MCF 10A (cell line): ENCODE measurements at regions of chr13 and their contacts with region 1.

Region 1: GRCh38 chr13:29850224-29850898 is at the start of gene UBL3:
- DNase-seq: peak; percentile 97
- H3K4me3 Mint-ChIP-seq: peak within 1 kb of the TSS; percentile 89
- H3K27ac Mint-ChIP-seq: peak within 1 kb of the TSS; percentile 100
- H3K4me1 Mint-ChIP-seq: peaks cover 12% of the 10 kb centered on the region
- H3K27me3 Mint-ChIP-seq: no peaks in the 10 kb centered on the region
- CTCF ChIP-seq: no peak
- total RNA-seq, gene UBL3: 18.2 and 22.4 TPM in 2 replicates

Region 2: GRCh38 chr13:28991764-28992163 is 858.6 kb before region 1 on chr13:
- CTCF ChIA-PET with region 1: no interaction called
- POLR2A ChIA-PET with region 1: no interaction called
- intact Hi-C with region 1: no loop called
- DNase-seq: no peak
- H3K4me3 Mint-ChIP-seq: no peak overlapping the region
- H3K27ac Mint-ChIP-seq: no peak overlapping the region
- H3K4me1 Mint-ChIP-seq: no peaks in the 10 kb centered on the region
- H3K27me3 Mint-ChIP-seq: no peaks in the 10 kb centered on the region
- CTCF ChIP-seq: no peak

Region 3: DNA sequence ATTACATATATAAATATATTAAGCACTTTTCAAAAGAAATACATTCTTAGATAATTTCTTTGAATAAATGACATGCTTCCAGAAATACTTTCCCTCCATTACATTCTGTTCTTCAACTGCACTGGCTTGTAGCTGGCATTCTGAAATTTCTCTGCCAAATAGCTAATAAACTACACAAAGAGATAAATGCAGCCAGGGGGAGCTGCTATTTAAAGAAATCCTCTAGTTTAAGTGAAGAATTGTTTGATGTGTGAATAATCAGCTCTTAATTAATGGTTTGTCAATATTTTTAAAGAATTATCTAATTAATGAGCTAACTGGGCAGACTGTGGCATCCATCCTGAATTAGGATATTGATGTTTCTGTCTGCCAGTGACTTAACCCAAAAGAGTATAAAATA is 285.5 kb before region 1 on chr13:
- CTCF ChIA-PET with region 1: no interaction called
- POLR2A ChIA-PET with region 1: interaction called, 13 read pairs
- intact Hi-C with region 1: no loop called
- DNase-seq: no peak
- H3K4me3 Mint-ChIP-seq: no peak overlapping the region
- H3K27ac Mint-ChIP-seq: no peak overlapping the region
- H3K4me1 Mint-ChIP-seq: peaks cover 52% of the 10 kb centered on the region
- H3K27me3 Mint-ChIP-seq: no peaks in the 10 kb centered on the region
- CTCF ChIP-seq: peak; percentile 7

Region 4: GRCh38 chr13:29861694-29862110 is 11.3 kb after region 1 on chr13:
- CTCF ChIA-PET with region 1: interaction called, 3 read pairs
- POLR2A ChIA-PET with region 1: interaction called, 21 read pairs
- intact Hi-C with region 1: no loop called
- DNase-seq: peak; percentile 15
- H3K4me3 Mint-ChIP-seq: no peak overlapping the region
- H3K27ac Mint-ChIP-seq: peak overlapping the region; percentile 82
- H3K4me1 Mint-ChIP-seq: peaks cover 17% of the 10 kb centered on the region
- H3K27me3 Mint-ChIP-seq: no peaks in the 10 kb centered on the region
- CTCF ChIP-seq: no peak

Region 5: GRCh38 chr13:29902101-29902952 is 52.0 kb after region 1 on chr13:
- CTCF ChIA-PET with region 1: interaction called, 9 read pairs
- POLR2A ChIA-PET with region 1: interaction called, 133 read pairs
- intact Hi-C with region 1: loop called (anchors 1 kb)
- DNase-seq: peak; percentile 94
- H3K4me3 Mint-ChIP-seq: peak overlapping the region; percentile 59
- H3K27ac Mint-ChIP-seq: peak overlapping the region; percentile 90
- H3K4me1 Mint-ChIP-seq: peaks cover 30% of the 10 kb centered on the region
- H3K27me3 Mint-ChIP-seq: no peaks in the 10 kb centered on the region
- CTCF ChIP-seq: no peak

Region 6: GRCh38 chr13:29923554-29924481 is 73.5 kb after region 1 on chr13:
- CTCF ChIA-PET with region 1: interaction called, 122 read pairs
- POLR2A ChIA-PET with region 1: interaction called, 417 read pairs
- intact Hi-C with region 1: loop called (anchors 1 kb)
- DNase-seq: peak; percentile 97
- H3K4me3 Mint-ChIP-seq: peak overlapping the region; percentile 37
- H3K27ac Mint-ChIP-seq: peak overlapping the region; percentile 98
- H3K4me1 Mint-ChIP-seq: peaks cover 71% of the 10 kb centered on the region
- H3K27me3 Mint-ChIP-seq: no peaks in the 10 kb centered on the region
- CTCF ChIP-seq: peak; percentile 94

Region 7: GRCh38 chr13:30114571-30115256 is 264.4 kb after region 1 on chr13:
- CTCF ChIA-PET with region 1: interaction called, 230 read pairs
- POLR2A ChIA-PET with region 1: interaction called, 264 read pairs
- intact Hi-C with region 1: loop called (anchors 1 kb)
- DNase-seq: peak; percentile 83
- H3K4me3 Mint-ChIP-seq: peak overlapping the region; percentile 72
- H3K27ac Mint-ChIP-seq: no peak overlapping the region
- H3K4me1 Mint-ChIP-seq: peaks cover 24% of the 10 kb centered on the region
- H3K27me3 Mint-ChIP-seq: no peaks in the 10 kb centered on the region
- CTCF ChIP-seq: peak; percentile 90